ENCODE measurements at regions of chr11 and their contacts with region 1.

Region 1: GRCh38 chr11:11265994-11266606 is 87.0 kb downstream of the CSNK2A3 start:
- DNase-seq: peak; percentile 16
- ATAC-seq: peak; percentile 96
- H3K4me3 ChIP-seq: no peak overlapping the region
- H3K27ac ChIP-seq: no peak overlapping the region
- H3K4me1 ChIP-seq: peaks cover 4 to 29% of the 10 kb centered on the region in 2 experiments; a peak in 2 of 4 replicates
- H3K27me3 ChIP-seq: no peaks in the 10 kb centered on the region
- CTCF ChIP-seq: peak; percentile 67 to 99 (median 98); a peak in 5 of 6 replicates
- POLR2A ChIP-seq: no peak
- RAD21 ChIP-seq: peak; percentile 77

Region 2: DNA sequence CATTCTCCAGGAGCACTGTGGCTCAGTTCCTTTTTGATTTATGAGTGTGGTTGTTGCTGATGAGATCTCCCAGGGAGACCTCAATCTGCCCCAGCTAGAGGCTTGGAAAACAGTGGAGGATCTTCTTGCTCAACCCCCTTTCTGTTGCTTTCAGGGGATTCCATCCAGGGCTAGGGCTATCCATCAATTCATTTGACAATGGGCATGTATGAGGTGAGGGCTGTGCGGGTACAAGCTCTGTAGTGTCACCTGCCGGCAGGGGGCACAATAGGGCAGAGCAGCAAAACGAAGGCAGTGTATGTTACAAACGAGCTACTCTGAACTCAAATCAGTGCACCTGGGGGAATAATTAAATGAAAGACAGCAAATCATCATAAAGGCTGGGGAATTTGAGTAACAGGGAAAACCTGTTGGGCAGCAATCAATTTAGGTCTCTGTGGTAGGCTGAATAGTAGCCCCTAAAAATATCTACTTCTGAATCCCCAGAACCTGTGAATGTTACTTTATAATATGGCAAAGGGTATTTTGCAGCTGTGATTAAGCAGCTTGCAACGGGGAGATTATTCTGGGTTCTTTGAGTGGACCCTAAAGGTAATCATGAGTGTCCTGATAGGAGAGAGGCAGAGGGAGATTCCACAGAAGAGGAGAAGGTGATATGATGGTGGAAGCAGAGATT is 237.9 kb before region 1 on chr11:
- CTCF ChIA-PET with region 1: interaction called, 4 read pairs
- POLR2A ChIA-PET with region 1: no interaction called
- RAD21 ChIA-PET with region 1: interaction called in 1 of 2 experiments, 4 read pairs
- intact Hi-C with region 1: loop called (anchors 2 kb)
- DNase-seq: peak; percentile 47
- ATAC-seq: peak; percentile 100
- H3K4me3 ChIP-seq: no peak overlapping the region
- H3K27ac ChIP-seq: no peak overlapping the region
- H3K4me1 ChIP-seq: peaks cover 0 to 6% of the 10 kb centered on the region in 2 experiments; a peak in 1 of 4 replicates
- H3K27me3 ChIP-seq: no peaks in the 10 kb centered on the region
- CTCF ChIP-seq: peak; percentile 76 to 95 (median 92)
- POLR2A ChIP-seq: no peak
- RAD21 ChIP-seq: peak; percentile 89